Calu3 (cell line): ENCODE measurements at regions of chr10 and their contacts with region 1.

Region 1: DNA sequence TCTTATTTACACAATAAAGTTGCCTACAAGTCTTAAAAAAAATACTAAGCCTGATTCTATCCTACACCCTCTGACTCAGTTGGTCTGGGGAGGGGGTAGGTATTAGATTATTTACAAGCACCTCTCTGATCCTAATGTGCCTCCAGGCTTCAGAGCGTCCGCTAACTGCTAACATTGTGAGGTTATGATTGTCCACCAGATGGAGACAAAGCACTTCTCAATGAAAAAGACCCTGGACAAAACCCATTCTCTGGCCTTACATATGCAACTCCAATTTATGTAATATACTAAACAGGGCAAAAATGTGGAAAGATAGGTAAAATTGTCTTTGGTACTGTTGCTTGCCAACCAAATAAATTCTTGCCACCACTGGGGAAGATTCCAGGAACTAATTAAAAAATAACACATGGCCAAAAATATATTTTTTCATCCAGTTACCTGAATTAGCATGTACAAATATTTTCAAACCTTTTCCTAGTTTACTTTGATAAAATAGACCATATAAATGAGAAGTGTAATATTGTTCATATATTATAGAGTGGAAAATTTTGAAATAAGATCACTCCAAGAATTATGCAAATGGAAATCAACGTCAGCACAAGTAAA is 92.4 kb downstream of the KIF20B start:
- DNase-seq: peak; percentile 39
- H3K4me3 Mint-ChIP-seq: no peak overlapping the region
- H3K27ac Mint-ChIP-seq: no peak overlapping the region
- H3K4me1 Mint-ChIP-seq: no peaks in the 10 kb centered on the region
- H3K27me3 Mint-ChIP-seq: no peaks in the 10 kb centered on the region
- CTCF ChIP-seq: peak; percentile 56

Region 2: DNA sequence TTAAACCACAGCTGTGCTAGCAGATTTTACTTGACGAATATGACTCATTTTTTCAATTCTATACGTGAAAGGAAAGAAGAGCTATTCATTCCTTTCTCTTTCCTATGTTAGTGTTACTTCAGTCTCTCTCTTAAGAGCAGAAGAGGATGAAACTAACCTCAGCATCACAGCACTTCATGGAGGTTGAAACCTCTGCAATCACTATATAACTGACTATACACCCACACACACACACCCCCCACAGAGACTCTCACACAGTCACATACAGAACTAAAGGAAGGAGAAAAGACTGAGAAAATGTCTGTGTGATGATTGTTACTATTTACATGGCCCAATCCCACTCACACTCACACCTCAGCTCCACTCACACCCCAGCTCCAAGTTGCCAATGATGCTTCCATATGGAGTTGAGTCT is 11.9 kb after region 1 on chr10:
- CTCF ChIA-PET with region 1: no interaction called
- intact Hi-C with region 1: no loop called
- DNase-seq: no peak
- H3K4me3 Mint-ChIP-seq: no peak overlapping the region
- H3K27ac Mint-ChIP-seq: no peak overlapping the region
- H3K4me1 Mint-ChIP-seq: no peaks in the 10 kb centered on the region
- H3K27me3 Mint-ChIP-seq: peaks cover 7% of the 10 kb centered on the region
- CTCF ChIP-seq: no peak

Region 3: DNA sequence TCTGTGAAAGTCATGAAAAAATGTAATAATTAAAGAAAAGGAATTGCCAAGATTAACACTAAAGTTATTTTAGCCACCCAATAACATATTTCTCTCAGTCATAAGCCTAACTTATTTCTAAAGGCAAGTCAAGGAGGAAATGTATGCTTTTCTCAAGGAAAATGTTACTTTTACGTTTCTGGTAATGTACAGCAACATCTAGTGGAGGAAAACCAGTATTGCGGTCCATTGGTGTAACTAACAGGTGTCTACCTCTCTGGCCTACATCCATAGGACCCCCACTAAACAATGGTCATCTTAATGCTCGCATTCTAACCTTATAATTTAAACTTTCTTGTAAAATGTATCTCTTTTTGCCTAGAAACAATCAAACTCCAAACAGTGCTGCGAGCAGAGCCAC is 345.1 kb after region 1 on chr10:
- CTCF ChIA-PET with region 1: no interaction called
- intact Hi-C with region 1: loop called (anchors 2 kb)
- DNase-seq: no peak
- H3K4me3 Mint-ChIP-seq: no peak overlapping the region
- H3K27ac Mint-ChIP-seq: no peak overlapping the region
- H3K4me1 Mint-ChIP-seq: no peaks in the 10 kb centered on the region
- H3K27me3 Mint-ChIP-seq: no peaks in the 10 kb centered on the region
- CTCF ChIP-seq: no peak

Region 4: GRCh38 chr10:90319188-90319914 is 525.6 kb after region 1 on chr10:
- CTCF ChIA-PET with region 1: no interaction called
- intact Hi-C with region 1: loop called (anchors 1 kb)
- DNase-seq: peak; percentile 55
- H3K4me3 Mint-ChIP-seq: no peak overlapping the region
- H3K27ac Mint-ChIP-seq: peak overlapping the region; percentile 66
- H3K4me1 Mint-ChIP-seq: peaks cover 14% of the 10 kb centered on the region
- H3K27me3 Mint-ChIP-seq: no peaks in the 10 kb centered on the region
- CTCF ChIP-seq: no peak

Region 5: GRCh38 chr10:90652519-90652918 is 858.8 kb after region 1 on chr10:
- CTCF ChIA-PET with region 1: no interaction called
- intact Hi-C with region 1: loop called (anchors 10 kb)
- DNase-seq: no peak
- H3K4me3 Mint-ChIP-seq: no peak overlapping the region
- H3K27ac Mint-ChIP-seq: no peak overlapping the region
- H3K4me1 Mint-ChIP-seq: no peaks in the 10 kb centered on the region
- H3K27me3 Mint-ChIP-seq: peaks cover 14% of the 10 kb centered on the region
- CTCF ChIP-seq: no peak

Region 6: GRCh38 chr10:90862908-90863514 is 1069.3 kb after region 1 on chr10:
- CTCF ChIA-PET with region 1: no interaction called
- intact Hi-C with region 1: loop called (anchors 10 kb)
- DNase-seq: peak; percentile 9
- H3K4me3 Mint-ChIP-seq: no peak overlapping the region
- H3K27ac Mint-ChIP-seq: no peak overlapping the region
- H3K4me1 Mint-ChIP-seq: no peaks in the 10 kb centered on the region
- H3K27me3 Mint-ChIP-seq: peaks cover 35% of the 10 kb centered on the region
- CTCF ChIP-seq: peak; percentile 41